ENCODE measurements at regions of chr5 and their contacts with region 1.

Region 1: GRCh38 chr5:172659909-172660628 is 19.0 kb downstream of the NEURL1B start:
- DNase-seq: peak; percentile 78 to 86 (median 84)
- H3K4me3 ChIP-seq: no peak overlapping the region
- H3K27ac ChIP-seq: peak overlapping the region; percentile 50 to 86
- H3K4me1 ChIP-seq: peaks cover 32% of the 10 kb centered on the region
- H3K27me3 ChIP-seq: no peaks in the 10 kb centered on the region
- CTCF ChIP-seq: no peak
- EP300 ChIP-seq: no peak
- POLR2A ChIP-seq: no peak

Region 2: GRCh38 chr5:172443441-172444109 is 216.5 kb before region 1 on chr5:
- intact Hi-C with region 1: no loop called
- DNase-seq: peak; percentile 89 to 93 (median 92)
- H3K4me3 ChIP-seq: no peak overlapping the region
- H3K27ac ChIP-seq: peak overlapping the region; percentile 31 to 69
- H3K4me1 ChIP-seq: peaks cover 26% of the 10 kb centered on the region
- H3K27me3 ChIP-seq: no peaks in the 10 kb centered on the region
- CTCF ChIP-seq: no peak
- EP300 ChIP-seq: peak; percentile 64
- POLR2A ChIP-seq: no peak

Region 3: GRCh38 chr5:172690258-172691075 is 30.4 kb after region 1 on chr5:
- intact Hi-C with region 1: loop called in 1 of 4 experiments (anchors 5 kb)
- DNase-seq: peak in 1 of 5 donors; percentile 26
- H3K4me3 ChIP-seq: no peak overlapping the region
- H3K27ac ChIP-seq: no peak overlapping the region
- H3K4me1 ChIP-seq: peaks cover 15% of the 10 kb centered on the region
- H3K27me3 ChIP-seq: no peaks in the 10 kb centered on the region
- CTCF ChIP-seq: no peak
- EP300 ChIP-seq: no peak
- POLR2A ChIP-seq: no peak

Region 4: DNA sequence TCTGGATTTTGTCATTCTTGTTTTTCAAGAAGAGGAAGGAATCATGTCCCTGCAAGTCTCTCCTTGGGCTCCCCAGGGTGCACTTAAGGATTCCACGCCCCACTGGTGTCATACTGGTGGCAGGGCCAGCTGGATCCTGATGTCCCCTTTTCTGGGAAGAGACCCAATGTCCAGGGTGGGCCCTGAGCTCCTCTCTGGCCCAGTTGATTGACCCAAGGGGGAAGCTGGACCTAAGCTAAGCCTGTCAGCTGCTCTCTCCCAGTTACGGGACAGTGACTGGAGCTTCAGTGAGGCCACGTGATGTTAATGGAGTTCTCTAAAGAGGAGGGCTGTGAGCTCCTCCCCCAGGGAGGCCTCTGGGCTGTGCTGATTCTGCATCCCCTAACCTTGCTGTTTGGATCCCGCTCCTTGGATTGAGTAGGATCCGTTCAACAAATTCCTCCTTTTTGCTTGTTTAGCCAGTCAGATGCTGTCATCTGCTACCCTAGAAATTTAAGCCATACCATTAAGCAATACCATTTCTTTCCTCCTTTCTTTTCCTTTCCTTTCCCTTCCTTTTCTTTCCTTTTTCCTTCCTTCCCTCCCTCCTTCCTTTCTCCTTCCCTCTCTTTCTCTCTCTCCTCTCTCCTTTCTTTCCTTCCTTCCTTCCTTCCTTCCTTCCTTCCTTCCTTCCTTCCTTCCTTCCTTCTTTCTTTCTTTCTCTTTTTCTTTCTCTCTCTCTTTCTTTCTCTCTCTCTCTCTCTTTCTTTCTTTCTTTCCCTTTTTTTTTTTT is 557.7 kb after region 1 on chr5:
- intact Hi-C with region 1: no loop called
- DNase-seq: no peak
- H3K4me3 ChIP-seq: no peak overlapping the region
- H3K27ac ChIP-seq: no peak overlapping the region
- H3K4me1 ChIP-seq: no peaks in the 10 kb centered on the region
- H3K27me3 ChIP-seq: no peaks in the 10 kb centered on the region
- CTCF ChIP-seq: no peak
- EP300 ChIP-seq: no peak
- POLR2A ChIP-seq: no peak

Measured in ovary (tissue), 10 donors.